ENCODE measurements at regions of chr4 and their contacts with region 1.

Region 1: GRCh38 chr4:94171616-94172015 is 36.0 kb upstream of the SMARCAD1 start:
- DNase-seq: no peak
- ATAC-seq: no peak
- H3K4me3 Mint-ChIP-seq: no peak overlapping the region
- H3K27ac Mint-ChIP-seq: no peak overlapping the region
- H3K4me1 Mint-ChIP-seq: no peaks in the 10 kb centered on the region
- H3K27me3 Mint-ChIP-seq: peaks cover 7% of the 10 kb centered on the region
- CTCF ChIP-seq: peak; percentile 49

Region 2: GRCh38 chr4:93480452-93480851 is 691.2 kb before region 1 on chr4:
- CTCF ChIA-PET with region 1: no interaction called
- POLR2A ChIA-PET with region 1: no interaction called
- intact Hi-C with region 1: no loop called
- DNase-seq: no peak
- ATAC-seq: no peak
- H3K4me3 Mint-ChIP-seq: no peak overlapping the region
- H3K27ac Mint-ChIP-seq: no peak overlapping the region
- H3K4me1 Mint-ChIP-seq: no peaks in the 10 kb centered on the region
- H3K27me3 Mint-ChIP-seq: no peaks in the 10 kb centered on the region
- CTCF ChIP-seq: no peak

Region 3: GRCh38 chr4:94063084-94063483 is 108.5 kb before region 1 on chr4:
- CTCF ChIA-PET with region 1: no interaction called
- POLR2A ChIA-PET with region 1: no interaction called
- intact Hi-C with region 1: no loop called
- DNase-seq: no peak
- ATAC-seq: no peak
- H3K4me3 Mint-ChIP-seq: no peak overlapping the region
- H3K27ac Mint-ChIP-seq: no peak overlapping the region
- H3K4me1 Mint-ChIP-seq: no peaks in the 10 kb centered on the region
- H3K27me3 Mint-ChIP-seq: no peaks in the 10 kb centered on the region
- CTCF ChIP-seq: no peak

Region 4: GRCh38 chr4:94181815-94182214 is 10.2 kb after region 1 on chr4:
- CTCF ChIA-PET with region 1: interaction called, 13 read pairs
- POLR2A ChIA-PET with region 1: no interaction called
- intact Hi-C with region 1: no loop called
- DNase-seq: no peak
- ATAC-seq: no peak
- H3K4me3 Mint-ChIP-seq: no peak overlapping the region
- H3K27ac Mint-ChIP-seq: no peak overlapping the region
- H3K4me1 Mint-ChIP-seq: no peaks in the 10 kb centered on the region
- H3K27me3 Mint-ChIP-seq: peaks cover 11% of the 10 kb centered on the region
- CTCF ChIP-seq: no peak

Region 5: GRCh38 chr4:94207469-94208224 is 36.0 kb after region 1 on chr4 and contains the start of gene SMARCAD1:
- CTCF ChIA-PET with region 1: no interaction called
- POLR2A ChIA-PET with region 1: no interaction called
- intact Hi-C with region 1: no loop called
- DNase-seq: peak; percentile 96
- ATAC-seq: peak; percentile 92
- H3K4me3 Mint-ChIP-seq: peak within 1 kb of the TSS; percentile 98
- H3K27ac Mint-ChIP-seq: peak within 1 kb of the TSS; percentile 100
- H3K4me1 Mint-ChIP-seq: peaks cover 29% of the 10 kb centered on the region
- H3K27me3 Mint-ChIP-seq: peaks cover 3% of the 10 kb centered on the region
- CTCF ChIP-seq: no peak
- total RNA-seq, gene SMARCAD1: 28.5 to 28.6 TPM

Region 6: DNA sequence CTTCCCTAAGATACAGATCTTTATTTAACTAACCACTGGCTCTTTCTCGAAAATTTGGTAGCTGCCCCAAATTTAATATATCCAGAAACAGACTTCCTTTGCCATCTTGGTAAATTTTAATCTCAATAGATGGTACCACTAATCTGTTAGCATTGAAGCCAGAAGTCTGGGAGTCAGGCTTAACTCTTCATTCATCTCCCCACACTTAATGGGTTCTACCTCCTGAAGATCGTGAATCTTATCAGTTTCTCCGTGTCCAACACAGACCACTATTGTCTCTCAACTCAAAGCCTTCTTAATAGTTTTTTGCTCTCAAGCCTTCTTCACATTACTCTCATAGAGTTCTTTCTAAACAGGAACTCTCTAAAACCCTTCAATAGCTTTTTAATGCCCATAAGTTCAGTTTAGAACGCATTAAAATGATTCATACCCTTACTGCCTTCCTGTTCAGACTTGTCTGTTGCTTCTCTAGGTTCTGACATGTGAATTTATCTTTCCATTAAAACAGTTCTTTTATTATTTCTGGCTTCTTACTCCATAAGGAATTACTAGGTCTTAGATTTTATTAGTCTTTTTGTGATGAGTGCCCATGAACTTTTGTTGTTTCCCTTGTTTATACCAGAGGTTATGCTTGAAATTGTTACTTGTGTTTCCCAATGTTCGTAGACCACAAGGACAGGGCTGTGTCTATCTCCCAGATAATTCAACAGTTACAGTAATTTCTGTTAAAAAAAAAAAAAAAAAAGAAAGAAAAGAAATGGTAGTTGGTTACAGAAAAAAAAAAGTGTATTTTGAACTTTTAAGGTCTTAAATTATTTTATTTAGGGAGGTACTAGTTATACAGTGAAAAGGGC is 90.8 kb after region 1 on chr4:
- CTCF ChIA-PET with region 1: no interaction called
- POLR2A ChIA-PET with region 1: no interaction called
- intact Hi-C with region 1: no loop called
- DNase-seq: no peak
- ATAC-seq: no peak
- H3K4me3 Mint-ChIP-seq: no peak overlapping the region
- H3K27ac Mint-ChIP-seq: no peak overlapping the region
- H3K4me1 Mint-ChIP-seq: no peaks in the 10 kb centered on the region
- H3K27me3 Mint-ChIP-seq: no peaks in the 10 kb centered on the region
- CTCF ChIP-seq: no peak

Measured in activated CD8-positive, alpha-beta T cell treated with anti-CD3 and anti-CD28 coated beads for 36 hours (primary cell).